ENCODE measurements at regions of chr1 and their contacts with region 1.

Region 1: GRCh38 chr1:99717005-99717404 is 49.4 kb downstream of the FRRS1 start:
- DNase-seq: no peak
- H3K4me3 ChIP-seq: no peak overlapping the region
- H3K27ac ChIP-seq: no peak overlapping the region
- H3K4me1 ChIP-seq: no peaks in the 10 kb centered on the region
- H3K27me3 ChIP-seq: no peaks in the 10 kb centered on the region
- CTCF ChIP-seq: no peak
- EP300 ChIP-seq: no peak
- POLR2A ChIP-seq: no peak

Region 2: DNA sequence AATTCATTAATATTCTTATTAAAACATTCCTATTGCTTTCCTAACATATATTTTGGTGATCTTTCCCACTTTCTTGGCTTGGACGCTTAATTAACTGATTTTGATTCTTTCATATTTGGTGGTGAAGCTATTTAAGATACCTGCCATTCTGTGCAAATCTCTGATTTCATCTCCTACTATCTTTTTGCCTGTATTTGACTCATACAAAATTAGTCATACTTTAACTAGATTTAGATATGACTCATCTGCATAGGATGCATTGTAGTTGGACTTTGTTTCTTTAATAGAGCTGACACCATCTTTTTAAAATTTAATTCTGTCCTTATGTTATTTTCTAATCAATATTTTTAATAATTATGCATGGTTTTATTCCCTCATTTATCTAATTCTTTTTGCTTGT is 546.5 kb before region 1 on chr1:
- intact Hi-C with region 1: loop called in 2 of 4 experiments (anchors 10 kb)
- DNase-seq: no peak
- H3K4me3 ChIP-seq: no peak overlapping the region
- H3K27ac ChIP-seq: no peak overlapping the region
- H3K4me1 ChIP-seq: peaks cover 2% of the 10 kb centered on the region
- H3K27me3 ChIP-seq: no peaks in the 10 kb centered on the region
- CTCF ChIP-seq: no peak
- EP300 ChIP-seq: no peak
- POLR2A ChIP-seq: no peak

Region 3: DNA sequence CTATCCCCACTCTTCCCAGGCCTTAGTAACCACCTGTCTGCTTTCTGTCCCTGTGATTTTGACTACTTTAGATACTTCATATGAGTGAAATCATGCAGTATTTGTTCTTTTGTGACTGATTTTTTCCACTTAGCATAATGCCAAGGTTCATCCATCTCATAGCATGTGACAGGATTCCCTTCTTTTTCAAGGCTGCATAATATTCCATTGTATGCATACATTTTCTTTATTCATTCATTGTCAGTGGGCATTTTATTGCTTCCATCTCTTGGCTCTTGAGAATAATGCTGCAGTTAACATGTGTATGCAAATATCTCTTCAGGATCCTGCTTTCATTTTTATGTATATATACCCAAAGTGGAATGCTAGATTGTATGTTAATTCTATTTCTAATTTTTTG is 189.5 kb after region 1 on chr1:
- intact Hi-C with region 1: no loop called
- DNase-seq: no peak
- H3K4me3 ChIP-seq: no peak overlapping the region
- H3K27ac ChIP-seq: no peak overlapping the region
- H3K4me1 ChIP-seq: no peaks in the 10 kb centered on the region
- H3K27me3 ChIP-seq: no peaks in the 10 kb centered on the region
- CTCF ChIP-seq: no peak
- EP300 ChIP-seq: no peak
- POLR2A ChIP-seq: no peak